Ascending aorta (tissue), 2 donors: ENCODE measurements at regions of chrX and their contacts with region 1.

Region 1: GRCh38 chrX:82813671-82814078 is 694.4 kb upstream of the POU3F4 start:
- DNase-seq: no peak
- H3K4me3 ChIP-seq: no peak overlapping the region
- H3K27ac ChIP-seq: no peak overlapping the region
- H3K4me1 ChIP-seq: no peaks in the 10 kb centered on the region
- H3K27me3 ChIP-seq: no peaks in the 10 kb centered on the region
- CTCF ChIP-seq: no peak

Region 2: GRCh38 chrX:81336455-81337152 is 1477.1 kb before region 1 on chrX:
- intact Hi-C with region 1: no loop called
- DNase-seq: no peak
- H3K4me3 ChIP-seq: no peak overlapping the region
- H3K27ac ChIP-seq: no peak overlapping the region
- H3K4me1 ChIP-seq: no peaks in the 10 kb centered on the region
- H3K27me3 ChIP-seq: no peaks in the 10 kb centered on the region
- CTCF ChIP-seq: no peak

Region 3: GRCh38 chrX:82658492-82658891 is 155.2 kb before region 1 on chrX:
- intact Hi-C with region 1: loop called (anchors 10 kb)
- DNase-seq: no peak
- H3K4me3 ChIP-seq: no peak overlapping the region
- H3K27ac ChIP-seq: no peak overlapping the region
- H3K4me1 ChIP-seq: no peaks in the 10 kb centered on the region
- H3K27me3 ChIP-seq: no peaks in the 10 kb centered on the region
- CTCF ChIP-seq: no peak

Region 4: GRCh38 chrX:82775426-82775825 is 38.2 kb before region 1 on chrX:
- intact Hi-C with region 1: no loop called
- DNase-seq: no peak
- H3K4me3 ChIP-seq: no peak overlapping the region
- H3K27ac ChIP-seq: no peak overlapping the region
- H3K4me1 ChIP-seq: no peaks in the 10 kb centered on the region
- H3K27me3 ChIP-seq: no peaks in the 10 kb centered on the region
- CTCF ChIP-seq: no peak

Region 5: GRCh38 chrX:83077606-83078005 is 263.9 kb after region 1 on chrX:
- intact Hi-C with region 1: no loop called
- DNase-seq: no peak
- H3K4me3 ChIP-seq: no peak overlapping the region
- H3K27ac ChIP-seq: no peak overlapping the region
- H3K4me1 ChIP-seq: no peaks in the 10 kb centered on the region
- H3K27me3 ChIP-seq: no peaks in the 10 kb centered on the region
- CTCF ChIP-seq: no peak